ENCODE measurements at regions of chr3 and their contacts with region 1.

Region 1: GRCh38 chr3:116233711-116234357 is 211.5 kb downstream of the LSAMP start:
- DNase-seq: no peak
- ATAC-seq: no peak
- H3K4me3 ChIP-seq: no peak overlapping the region
- H3K27ac ChIP-seq: no peak overlapping the region
- H3K4me1 ChIP-seq: no peaks in the 10 kb centered on the region
- H3K27me3 ChIP-seq: no peaks in the 10 kb centered on the region
- CTCF ChIP-seq: no peak

Region 2: GRCh38 chr3:116150655-116151167 is 83.1 kb before region 1 on chr3:
- CTCF ChIA-PET with region 1: no interaction called
- POLR2A ChIA-PET with region 1: interaction called, 12 read pairs
- in situ Hi-C with region 1: no loop called
- intact Hi-C with region 1: no loop called
- DNase-seq: no peak
- ATAC-seq: no peak
- H3K4me3 ChIP-seq: no peak overlapping the region
- H3K27ac ChIP-seq: peak overlapping the region; percentile 45; the same call in 1 of the 2 replicates
- H3K4me1 ChIP-seq: no peaks in the 10 kb centered on the region; the same call in 1 of the 2 replicates
- H3K27me3 ChIP-seq: no peaks in the 10 kb centered on the region
- CTCF ChIP-seq: no peak